Left colon (tissue), 2 donors: ENCODE measurements at regions of chr5 and their contacts with region 1.

Region 1: GRCh38 chr5:59799668-59800346 is 93.7 kb downstream of the PDE4D start:
- DNase-seq: no peak
- ATAC-seq: peak; percentile 81

Region 2: DNA sequence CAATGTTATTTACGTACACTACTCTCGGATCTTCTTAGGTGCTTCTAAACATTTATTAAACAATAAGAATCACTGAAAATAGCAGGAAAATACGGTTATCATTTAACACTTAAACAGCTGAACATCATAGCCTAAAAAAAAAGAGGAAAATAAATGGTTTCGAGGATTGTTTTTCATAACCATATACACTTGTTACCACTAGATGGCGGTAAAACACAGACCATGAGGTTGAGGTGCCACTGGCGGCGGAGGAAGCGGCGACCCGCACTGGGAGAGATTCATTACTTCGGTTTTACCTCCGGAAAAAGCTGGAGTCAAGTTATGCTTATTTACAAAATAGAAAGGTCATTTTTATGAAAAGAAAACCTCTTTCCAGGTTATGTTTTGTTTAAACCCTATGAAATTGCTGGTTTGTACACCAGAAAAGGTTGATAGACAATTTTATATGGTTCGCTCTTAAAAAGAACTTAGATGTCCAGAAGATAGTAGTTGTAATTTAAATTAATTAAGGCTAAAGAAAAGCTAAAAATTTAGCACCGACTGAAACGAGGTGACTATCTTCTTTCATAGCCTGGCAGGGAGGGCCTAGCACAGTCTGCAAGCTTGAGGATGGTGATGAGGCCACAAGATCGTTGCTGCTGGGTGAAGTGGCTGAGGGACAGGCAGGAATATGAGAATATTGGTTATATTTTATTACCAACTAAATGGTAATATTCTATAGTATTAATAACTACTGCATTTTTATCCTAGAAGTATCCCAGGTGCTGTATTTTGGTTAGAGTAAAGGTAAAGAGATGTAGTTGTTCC is 611.2 kb before region 1 on chr5:
- intact Hi-C with region 1: loop called in 1 of 2 experiments (anchors 10 kb)
- DNase-seq: peak; percentile 56 to 71
- ATAC-seq: peak; percentile 82

Region 3: DNA sequence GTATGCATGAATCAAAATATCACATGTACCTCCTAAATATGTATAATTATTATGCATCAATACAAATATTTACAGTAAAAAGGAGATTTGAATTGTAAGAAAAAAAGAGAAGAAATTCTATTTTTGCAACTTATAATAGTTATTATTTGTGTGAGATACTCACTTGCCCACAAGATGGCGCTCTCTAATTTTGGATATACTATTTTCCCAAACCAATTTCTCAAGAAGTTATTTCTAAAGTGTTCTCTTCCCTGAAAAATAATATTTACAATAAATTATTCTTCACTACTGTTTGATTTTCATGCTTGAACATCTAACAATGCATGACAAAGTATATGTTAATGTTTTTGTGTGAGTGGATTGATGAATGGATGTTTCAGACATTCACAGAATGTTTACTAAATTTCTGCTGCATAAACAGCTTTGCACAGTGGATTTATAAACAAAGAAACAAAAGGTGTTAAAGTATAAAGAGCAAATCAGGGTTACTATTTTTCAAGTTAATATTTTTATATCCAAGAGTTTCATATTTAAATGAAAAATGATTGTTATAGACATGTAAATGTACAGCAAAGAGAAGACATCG is 409.6 kb before region 1 on chr5:
- intact Hi-C with region 1: loop called in 1 of 2 experiments (anchors 2 kb)
- DNase-seq: peak in 1 of 2 donors; percentile 20
- ATAC-seq: no peak

Region 4: GRCh38 chr5:59506285-59506877 is 293.4 kb before region 1 on chr5:
- intact Hi-C with region 1: loop called in 1 of 2 experiments (anchors 5 kb)
- DNase-seq: no peak
- ATAC-seq: peak; percentile 56